Activated CD4-positive, alpha-beta memory T cell treated with anti-CD3 and anti-CD28 coated beads for 36 hours (primary cell): ENCODE measurements at regions of chr11 and their contacts with region 1.

Region 1: DNA sequence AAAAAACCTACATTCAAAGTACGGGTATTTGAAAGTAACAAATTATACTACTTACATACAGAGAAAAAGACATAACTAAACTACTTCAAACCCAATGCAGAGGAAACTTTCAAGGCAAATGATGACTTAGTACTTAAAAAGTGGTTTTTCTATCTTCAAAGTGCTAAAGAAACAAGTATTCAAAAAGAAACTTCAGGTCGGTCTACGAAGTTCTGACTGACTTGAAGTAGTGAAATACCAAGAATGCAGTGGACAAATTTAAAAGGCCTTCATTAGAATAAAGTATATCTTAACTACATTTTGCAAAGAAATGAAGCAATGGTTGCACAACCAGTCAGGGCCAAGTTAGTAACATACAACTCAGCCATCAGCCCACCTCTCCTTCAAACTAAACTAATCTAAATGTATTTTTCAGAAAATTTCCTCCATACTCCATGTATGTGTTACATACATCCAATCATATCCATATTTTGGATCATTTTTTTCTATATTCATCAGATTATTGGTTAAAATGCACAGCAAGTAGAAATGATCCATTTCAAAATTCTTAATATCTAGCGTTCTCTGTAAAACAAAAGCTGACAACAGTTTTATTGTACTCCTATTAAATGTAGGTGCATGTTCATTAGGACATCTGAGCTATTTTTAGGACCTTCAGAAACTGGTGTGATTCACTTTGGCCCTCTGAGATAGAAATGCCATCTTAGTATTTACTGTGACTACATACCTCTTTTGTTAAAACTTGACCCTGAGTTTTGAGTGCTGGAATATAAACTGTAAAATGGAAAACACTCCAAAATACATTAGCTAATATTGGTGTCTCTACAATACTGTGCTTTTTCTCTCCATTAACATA is 49.9 kb downstream of the BIRC2 start:
- DNase-seq: no peak
- H3K4me3 Mint-ChIP-seq: no peak overlapping the region
- H3K27ac Mint-ChIP-seq: peak overlapping the region; percentile 67
- H3K4me1 Mint-ChIP-seq: peaks cover 46% of the 10 kb centered on the region
- H3K27me3 Mint-ChIP-seq: no peaks in the 10 kb centered on the region

Region 2: GRCh38 chr11:102413497-102413896 is 16.6 kb after region 1 on chr11:
- CTCF ChIA-PET with region 1: interaction called, 17 read pairs
- POLR2A ChIA-PET with region 1: interaction called, 4 read pairs
- intact Hi-C with region 1: loop called (anchors 1 kb)
- DNase-seq: no peak
- H3K4me3 Mint-ChIP-seq: no peak overlapping the region
- H3K27ac Mint-ChIP-seq: peak overlapping the region; percentile 52
- H3K4me1 Mint-ChIP-seq: peaks cover 79% of the 10 kb centered on the region
- H3K27me3 Mint-ChIP-seq: no peaks in the 10 kb centered on the region

Region 3: DNA sequence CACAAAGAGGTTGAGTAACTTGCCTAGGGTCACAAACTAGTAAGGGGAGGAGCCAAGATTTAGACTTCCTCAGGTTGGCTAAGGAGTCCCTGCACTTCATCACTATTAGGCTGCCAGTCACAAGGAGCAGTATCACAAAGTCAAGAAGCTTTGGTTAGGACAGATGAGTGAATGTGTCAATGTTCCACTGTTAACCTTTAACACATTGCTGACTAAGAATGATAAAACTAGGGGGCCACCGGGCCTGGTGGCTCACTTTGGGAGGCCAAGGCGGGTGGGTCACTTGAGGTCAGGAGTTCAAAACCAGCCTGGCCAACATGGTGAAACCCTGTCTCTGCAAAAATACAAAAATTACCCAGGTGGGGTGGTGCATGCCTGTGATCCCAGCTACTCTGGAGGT is 23.6 kb after region 1 on chr11:
- CTCF ChIA-PET with region 1: interaction called, 17 read pairs
- POLR2A ChIA-PET with region 1: interaction called, 4 read pairs
- intact Hi-C with region 1: loop called (anchors 1 kb)
- DNase-seq: peak; percentile 67
- H3K4me3 Mint-ChIP-seq: no peak overlapping the region
- H3K27ac Mint-ChIP-seq: peak overlapping the region; percentile 52
- H3K4me1 Mint-ChIP-seq: peaks cover 93% of the 10 kb centered on the region
- H3K27me3 Mint-ChIP-seq: no peaks in the 10 kb centered on the region

Region 4: DNA sequence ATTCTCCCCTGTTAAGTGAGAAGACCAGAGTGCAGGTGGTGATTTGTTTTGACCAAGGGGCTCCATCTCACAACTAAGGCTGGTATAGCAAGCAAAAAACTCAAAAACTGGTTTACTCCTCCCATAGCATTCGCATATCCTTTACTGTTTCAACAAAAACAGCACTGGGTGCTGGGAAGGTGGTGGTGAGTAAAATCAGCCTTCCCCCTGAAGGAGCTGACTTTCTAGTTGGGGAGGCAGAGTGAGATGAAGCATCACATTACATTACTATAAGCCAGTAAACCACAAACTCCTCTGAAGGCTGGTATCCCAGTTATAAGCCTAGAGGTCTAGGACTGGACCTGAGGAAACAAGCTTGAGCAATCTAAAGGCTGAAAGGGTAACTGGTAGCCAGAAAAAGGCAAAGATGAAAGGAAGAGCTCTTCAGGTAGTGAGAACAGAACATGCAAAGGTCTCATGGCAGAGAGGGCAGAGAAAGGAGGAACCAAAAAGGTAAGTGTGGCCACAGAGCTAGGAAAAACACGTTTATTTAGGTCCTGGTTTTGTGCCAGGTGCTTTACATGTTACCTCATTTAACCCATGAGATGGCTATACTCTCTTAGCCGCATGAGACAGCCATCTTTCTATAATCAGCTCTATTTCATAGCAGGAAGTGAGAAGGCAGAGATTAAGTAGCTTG is 33.4 kb after region 1 on chr11:
- CTCF ChIA-PET with region 1: interaction called, 5 read pairs
- POLR2A ChIA-PET with region 1: no interaction called
- intact Hi-C with region 1: loop called (anchors 1 kb)
- DNase-seq: peak; percentile 74
- H3K4me3 Mint-ChIP-seq: peak overlapping the region; percentile 45
- H3K27ac Mint-ChIP-seq: peak overlapping the region; percentile 94
- H3K4me1 Mint-ChIP-seq: peaks cover 69% of the 10 kb centered on the region
- H3K27me3 Mint-ChIP-seq: no peaks in the 10 kb centered on the region

Region 5: GRCh38 chr11:102495161-102496042 is 98.5 kb after region 1 on chr11:
- CTCF ChIA-PET with region 1: interaction called, 63 read pairs
- POLR2A ChIA-PET with region 1: no interaction called
- intact Hi-C with region 1: loop called (anchors 1 kb)
- DNase-seq: peak; percentile 22
- H3K4me3 Mint-ChIP-seq: no peak overlapping the region
- H3K27ac Mint-ChIP-seq: no peak overlapping the region
- H3K4me1 Mint-ChIP-seq: peaks cover 18% of the 10 kb centered on the region
- H3K27me3 Mint-ChIP-seq: peaks cover 7% of the 10 kb centered on the region